K562 (cell line): ENCODE measurements at regions of chrX and their contacts with region 1.

Region 1: GRCh38 chrX:7965436-7965835 is 38.2 kb upstream of the PNPLA4 start:
- DNase-seq: no peak
- ATAC-seq: no peak
- H3K4me3 ChIP-seq: no peak overlapping the region
- H3K27ac ChIP-seq: no peak overlapping the region
- H3K4me1 ChIP-seq: no peaks in the 10 kb centered on the region
- H3K27me3 ChIP-seq: no peaks in the 10 kb centered on the region
- CTCF ChIP-seq: no peak
- EP300 ChIP-seq: no peak
- POLR2A ChIP-seq: no peak
- RAD21 ChIP-seq: no peak

Region 2: GRCh38 chrX:7596822-7597221 is 368.6 kb before region 1 on chrX:
- CTCF ChIA-PET with region 1: no interaction called
- POLR2A ChIA-PET with region 1: no interaction called
- in situ Hi-C with region 1: no loop called
- intact Hi-C with region 1: no loop called
- DNase-seq: no peak
- ATAC-seq: no peak
- H3K4me3 ChIP-seq: no peak overlapping the region
- H3K27ac ChIP-seq: no peak overlapping the region
- H3K4me1 ChIP-seq: no peaks in the 10 kb centered on the region
- H3K27me3 ChIP-seq: no peaks in the 10 kb centered on the region
- CTCF ChIP-seq: no peak
- EP300 ChIP-seq: no peak
- POLR2A ChIP-seq: no peak
- RAD21 ChIP-seq: no peak

Region 3: GRCh38 chrX:7904562-7904961 is 60.9 kb before region 1 on chrX:
- CTCF ChIA-PET with region 1: no interaction called
- POLR2A ChIA-PET with region 1: no interaction called
- in situ Hi-C with region 1: no loop called
- intact Hi-C with region 1: no loop called
- DNase-seq: no peak
- ATAC-seq: no peak
- H3K4me3 ChIP-seq: no peak overlapping the region
- H3K27ac ChIP-seq: no peak overlapping the region
- H3K4me1 ChIP-seq: no peaks in the 10 kb centered on the region
- H3K27me3 ChIP-seq: no peaks in the 10 kb centered on the region
- CTCF ChIP-seq: no peak
- EP300 ChIP-seq: no peak
- POLR2A ChIP-seq: no peak
- RAD21 ChIP-seq: no peak

Region 4: GRCh38 chrX:7987160-7988012 is 21.9 kb after region 1 on chrX:
- CTCF ChIA-PET with region 1: no interaction called
- POLR2A ChIA-PET with region 1: no interaction called
- in situ Hi-C with region 1: no loop called
- intact Hi-C with region 1: loop called (anchors 1 kb)
- DNase-seq: no peak
- ATAC-seq: no peak
- H3K4me3 ChIP-seq: no peak overlapping the region
- H3K27ac ChIP-seq: no peak overlapping the region
- H3K4me1 ChIP-seq: no peaks in the 10 kb centered on the region
- H3K27me3 ChIP-seq: no peaks in the 10 kb centered on the region
- CTCF ChIP-seq: no peak
- EP300 ChIP-seq: no peak
- POLR2A ChIP-seq: no peak
- RAD21 ChIP-seq: no peak